ENCODE measurements at regions of chr10 and their contacts with region 1.

Region 1: DNA sequence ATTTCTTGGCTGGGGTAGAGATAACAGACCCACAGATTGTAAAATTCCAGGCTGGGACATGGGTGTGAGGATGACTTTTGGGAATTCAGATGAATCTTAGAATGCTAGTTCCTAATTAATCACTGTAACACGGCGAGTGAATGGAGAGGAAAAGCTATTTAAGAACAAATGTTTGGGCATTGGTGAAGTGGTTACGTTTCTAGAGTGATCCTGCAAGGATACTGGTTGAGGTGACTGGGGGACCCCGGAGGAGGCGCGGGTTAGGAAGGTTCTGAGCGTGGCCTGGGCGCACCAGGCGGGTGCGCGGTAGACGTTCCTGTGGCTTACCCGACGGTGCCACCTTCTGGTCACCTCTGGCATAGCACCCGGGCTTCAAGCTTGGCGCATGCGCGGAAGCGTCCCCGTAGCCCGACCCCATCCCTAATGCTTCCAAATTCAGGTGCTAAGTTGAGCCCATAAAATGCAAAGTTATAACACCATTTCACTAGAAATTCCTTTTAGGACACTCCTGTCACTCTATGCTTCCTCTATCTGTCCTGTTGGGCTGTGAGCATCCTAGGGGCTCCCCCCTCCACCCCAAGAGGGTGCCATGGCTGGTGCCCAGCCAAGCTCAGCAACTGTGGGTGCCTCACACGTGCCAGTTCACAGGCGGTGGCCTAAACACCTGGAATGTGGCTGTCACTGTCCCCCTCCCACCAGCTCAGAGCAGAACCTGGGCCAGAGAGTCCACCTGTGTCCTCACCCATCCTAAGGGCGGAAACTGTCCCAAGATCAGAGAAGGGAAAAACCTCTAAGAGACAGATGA is 104.5 kb downstream of the PTPRE start:
- DNase-seq: peak; percentile 67 to 92 (median 85)
- H3K4me3 ChIP-seq: peak overlapping the region in 1 of 4 donors; percentile 11
- H3K27ac ChIP-seq: peak overlapping the region in 2 of 5 donors; percentile 28 to 82
- H3K4me1 ChIP-seq: peaks cover 25 to 28% of the 10 kb centered on the region in 2 donors
- H3K27me3 ChIP-seq: no peaks in the 10 kb centered on the region
- CTCF ChIP-seq: peak; percentile 96 to 99 (median 98)
- POLR2A ChIP-seq: no peak

Region 2: DNA sequence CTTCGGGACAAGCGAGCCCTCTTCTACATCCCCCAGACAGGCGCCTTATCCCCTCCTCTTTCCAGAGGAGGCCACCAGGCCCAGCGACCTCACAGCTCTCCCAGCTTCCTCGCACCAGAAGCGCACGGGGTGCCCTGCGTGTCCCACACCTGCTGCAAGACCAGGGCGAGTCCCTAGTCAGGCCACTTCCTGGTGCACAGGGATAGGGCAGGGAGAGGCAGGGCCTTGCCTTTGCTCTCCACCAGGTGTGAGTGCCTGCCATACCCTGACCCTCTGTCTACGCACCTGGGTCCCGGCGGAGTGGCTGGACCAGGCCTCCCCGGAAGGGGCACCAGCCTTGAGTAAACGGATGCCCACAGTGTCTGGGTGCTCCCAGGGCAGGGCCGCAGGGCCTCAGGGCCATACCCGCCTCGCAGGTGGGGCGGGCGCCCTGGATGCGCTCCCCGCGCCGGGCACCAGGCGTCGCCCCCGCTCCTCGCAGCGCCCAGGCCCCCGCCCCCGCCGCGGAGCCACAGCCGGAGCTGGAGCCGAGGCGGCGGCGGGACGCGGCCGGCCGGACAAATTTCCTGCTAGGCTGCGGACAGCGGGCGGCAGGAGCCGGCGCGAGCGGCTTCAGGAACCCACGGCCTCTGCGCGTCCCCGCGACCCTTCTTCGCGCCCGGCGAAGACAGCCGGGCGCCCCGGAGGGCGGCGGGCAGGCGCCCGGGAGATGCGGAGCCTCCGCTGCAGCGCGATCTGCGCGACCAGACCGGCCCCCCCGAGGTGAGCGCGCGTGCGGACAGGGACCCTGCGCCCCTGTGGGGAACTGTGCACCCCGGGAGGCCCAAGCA is 104.6 kb before region 1 on chr10 and contains the start of gene PTPRE:
- intact Hi-C with region 1: loop called (anchors 2 kb)
- DNase-seq: peak; percentile 76 to 85 (median 82)
- H3K4me3 ChIP-seq: peak within 1 kb of the TSS in 3 of 4 donors; percentile 52 to 90 (median 55)
- H3K27ac ChIP-seq: peak within 1 kb of the TSS; percentile 60 to 93 (median 91)
- H3K4me1 ChIP-seq: peaks cover 32 to 40% of the 10 kb centered on the region in 2 donors
- H3K27me3 ChIP-seq: no peaks in the 10 kb centered on the region
- CTCF ChIP-seq: peak; percentile 10 to 99 (median 75)
- POLR2A ChIP-seq: peak in 1 of 2 donors; percentile 65
- total RNA-seq, gene PTPRE: 24.9 to 52.8 (median 43.9) TPM

Region 3: DNA sequence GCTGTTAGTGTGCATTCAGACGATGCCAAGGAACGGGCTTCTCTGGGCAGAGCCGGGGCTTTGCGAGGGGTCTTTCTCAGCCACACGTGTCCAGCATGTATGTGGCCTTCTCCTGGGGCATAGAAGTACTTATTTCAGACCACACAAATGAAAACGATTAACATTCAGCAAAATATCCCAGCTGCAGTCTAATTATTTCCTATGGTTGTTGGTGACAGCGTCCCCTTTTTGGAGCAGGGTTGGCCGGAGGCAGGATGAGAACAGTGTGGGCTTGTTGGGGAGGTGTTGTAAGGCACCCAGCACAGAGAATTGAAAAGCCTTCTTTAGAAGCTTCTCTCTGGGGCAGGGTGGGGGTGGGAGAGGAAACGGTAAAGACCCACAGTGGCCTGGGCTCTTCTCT is 50.3 kb before region 1 on chr10:
- intact Hi-C with region 1: no loop called
- DNase-seq: no peak
- H3K4me3 ChIP-seq: no peak overlapping the region
- H3K27ac ChIP-seq: peak overlapping the region in 1 of 5 donors; percentile 89
- H3K4me1 ChIP-seq: peaks cover 9 to 16% of the 10 kb centered on the region in 2 donors
- H3K27me3 ChIP-seq: no peaks in the 10 kb centered on the region
- CTCF ChIP-seq: no peak
- POLR2A ChIP-seq: no peak

Region 4: GRCh38 chr10:128050936-128051335 is 39.6 kb after region 1 on chr10:
- intact Hi-C with region 1: no loop called
- DNase-seq: peak in 1 of 7 donors; percentile 39
- H3K4me3 ChIP-seq: no peak overlapping the region
- H3K27ac ChIP-seq: peak overlapping the region in 3 of 5 donors; percentile 18 to 81 (median 43)
- H3K4me1 ChIP-seq: peaks cover 0 to 3% of the 10 kb centered on the region in 2 donors
- H3K27me3 ChIP-seq: no peaks in the 10 kb centered on the region
- CTCF ChIP-seq: no peak
- POLR2A ChIP-seq: no peak

Region 5: DNA sequence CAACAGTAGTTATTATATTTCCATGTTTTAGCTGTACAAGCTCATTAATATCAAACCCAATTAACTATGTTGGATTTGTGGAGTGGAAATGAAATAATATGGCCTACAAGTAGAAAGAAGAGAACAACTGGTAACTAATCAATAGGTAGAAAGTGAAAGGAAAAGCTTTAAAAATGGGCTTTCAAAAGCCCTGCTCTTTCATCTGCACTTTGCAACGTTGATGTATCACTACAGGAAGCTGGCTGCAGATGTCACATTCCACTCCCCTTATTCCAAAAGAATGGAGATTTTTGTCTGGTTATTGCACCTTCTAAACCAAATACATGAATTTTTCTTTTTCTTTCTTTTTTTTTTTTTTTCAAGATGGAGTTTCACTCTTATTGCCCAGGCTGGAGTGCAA is 126.5 kb after region 1 on chr10:
- intact Hi-C with region 1: no loop called
- DNase-seq: no peak
- H3K4me3 ChIP-seq: no peak overlapping the region
- H3K27ac ChIP-seq: no peak overlapping the region
- H3K4me1 ChIP-seq: no peaks in the 10 kb centered on the region
- H3K27me3 ChIP-seq: no peaks in the 10 kb centered on the region
- CTCF ChIP-seq: no peak
- POLR2A ChIP-seq: no peak